ENCODE measurements at regions of chr1 and their contacts with region 1.

Region 1: GRCh38 chr1:116806245-116806644 is 52.0 kb downstream of the CD2 start:
- DNase-seq: peak; percentile 18
- CTCF ChIP-seq: no peak

Region 2: DNA sequence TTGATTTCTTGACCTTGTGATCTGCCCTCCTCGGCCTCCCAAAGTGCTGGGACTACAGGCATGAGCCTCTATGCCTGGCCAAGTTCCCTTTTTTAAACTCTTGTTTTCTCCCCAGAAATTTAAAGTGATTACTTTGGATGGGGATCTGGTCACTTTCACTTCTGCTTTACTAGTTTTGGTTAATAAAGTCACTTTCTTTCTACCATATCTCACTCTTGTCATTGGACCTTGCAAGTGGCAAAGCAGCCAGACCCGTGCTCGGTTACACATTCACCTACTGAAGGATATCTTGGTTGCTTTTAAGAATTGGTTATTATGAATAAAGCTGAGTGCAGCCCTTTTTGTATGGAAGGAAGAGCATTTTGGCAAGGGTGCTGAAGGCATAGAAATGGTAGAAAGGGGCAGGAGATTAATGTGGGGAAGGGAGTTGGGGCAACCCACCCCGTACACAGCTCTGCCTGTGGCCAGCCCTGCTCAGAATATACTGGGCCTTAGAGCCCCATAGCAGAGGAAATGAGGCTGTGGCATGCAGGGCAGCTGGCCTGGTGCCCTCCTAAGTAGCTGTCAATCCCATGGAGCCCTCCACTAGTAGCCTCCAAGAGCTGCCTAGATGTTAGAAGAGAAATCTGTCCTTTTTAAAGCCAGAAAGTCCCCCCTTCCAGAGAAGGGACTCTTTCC is 11.3 kb before region 1 on chr1:
- CTCF ChIA-PET with region 1: interaction called, 10 read pairs
- POLR2A ChIA-PET with region 1: no interaction called
- DNase-seq: peak; percentile 62
- CTCF ChIP-seq: no peak